ENCODE measurements at regions of chr2 and their contacts with region 1.

Region 1: GRCh38 chr2:150938527-150938926 is 323.1 kb downstream of the RBM43 start:
- DNase-seq: no peak
- H3K4me3 ChIP-seq: no peak overlapping the region
- H3K27ac ChIP-seq: no peak overlapping the region
- H3K4me1 ChIP-seq: no peaks in the 10 kb centered on the region
- H3K27me3 ChIP-seq: no peaks in the 10 kb centered on the region
- CTCF ChIP-seq: no peak
- POLR2A ChIP-seq: no peak

Region 2: GRCh38 chr2:150051004-150051403 is 887.5 kb before region 1 on chr2:
- intact Hi-C with region 1: no loop called
- DNase-seq: no peak
- H3K4me3 ChIP-seq: no peak overlapping the region
- H3K27ac ChIP-seq: no peak overlapping the region
- H3K4me1 ChIP-seq: no peaks in the 10 kb centered on the region
- H3K27me3 ChIP-seq: no peaks in the 10 kb centered on the region
- CTCF ChIP-seq: no peak
- POLR2A ChIP-seq: no peak

Region 3: DNA sequence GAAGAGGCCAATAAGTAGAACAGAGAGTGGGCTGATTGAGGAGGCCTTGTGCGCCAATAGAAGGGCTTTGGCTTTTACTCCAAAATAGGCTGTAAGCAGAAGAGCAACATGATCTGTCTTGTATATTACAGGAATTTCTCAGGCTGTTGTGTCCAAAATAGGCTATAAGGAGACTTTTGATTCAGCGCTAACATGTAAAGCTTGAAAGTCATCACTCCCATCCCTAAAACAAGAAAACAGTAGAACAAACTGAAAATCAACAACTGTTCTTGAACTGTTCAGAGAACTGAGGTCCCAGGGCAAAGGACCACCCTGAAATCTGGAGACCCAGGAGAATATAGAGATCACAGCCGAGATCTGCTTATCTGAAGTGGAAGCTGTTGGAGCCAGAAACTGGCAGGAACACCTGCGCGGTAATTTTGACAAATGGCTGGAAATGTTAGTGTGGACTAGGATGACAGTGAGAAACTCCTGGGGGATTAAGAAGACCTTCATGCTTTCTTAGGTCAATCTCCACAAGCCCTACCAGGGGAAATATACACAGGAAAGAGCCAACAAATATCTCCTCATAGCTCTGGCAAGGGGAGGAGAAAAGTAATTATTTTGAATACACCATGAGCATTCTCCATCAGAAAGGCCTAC is 64.6 kb after region 1 on chr2:
- intact Hi-C with region 1: loop called (anchors 2 kb)
- DNase-seq: no peak
- H3K4me3 ChIP-seq: no peak overlapping the region
- H3K27ac ChIP-seq: no peak overlapping the region
- H3K4me1 ChIP-seq: no peaks in the 10 kb centered on the region
- H3K27me3 ChIP-seq: no peaks in the 10 kb centered on the region
- CTCF ChIP-seq: no peak
- POLR2A ChIP-seq: no peak